ENCODE measurements at regions of chr9 and their contacts with region 1.

Region 1: GRCh38 chr9:124617471-124618141 is 110.4 kb upstream of the NR5A1 start:
- DNase-seq: peak; percentile 89
- H3K4me3 Mint-ChIP-seq: no peak overlapping the region
- H3K27ac Mint-ChIP-seq: no peak overlapping the region
- H3K4me1 Mint-ChIP-seq: no peaks in the 10 kb centered on the region
- H3K27me3 Mint-ChIP-seq: no peaks in the 10 kb centered on the region

Region 2: DNA sequence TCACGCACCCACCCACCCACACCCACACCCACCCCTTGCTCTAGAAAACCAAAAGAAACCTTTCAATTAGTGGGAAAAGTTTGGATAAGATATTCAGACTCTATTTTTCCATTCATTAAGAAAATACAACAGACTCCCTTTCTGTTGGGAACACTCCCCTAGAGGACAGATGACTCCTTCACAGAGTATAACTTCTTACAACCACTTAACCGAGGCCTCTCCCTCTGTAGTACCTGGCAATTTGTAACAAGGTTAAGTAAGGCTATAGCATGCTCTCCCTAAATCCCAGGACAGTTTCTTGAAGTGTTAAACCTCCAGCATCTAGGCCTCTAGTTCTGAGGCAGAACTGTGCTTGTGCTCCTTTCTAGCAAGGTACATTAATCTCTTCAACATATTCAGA is 34.5 kb before region 1 on chr9:
- CTCF ChIA-PET with region 1: no interaction called
- intact Hi-C with region 1: no loop called
- DNase-seq: no peak
- H3K4me3 Mint-ChIP-seq: no peak overlapping the region
- H3K27ac Mint-ChIP-seq: no peak overlapping the region
- H3K4me1 Mint-ChIP-seq: no peaks in the 10 kb centered on the region
- H3K27me3 Mint-ChIP-seq: no peaks in the 10 kb centered on the region

Region 3: GRCh38 chr9:124598048-124598447 is 19.6 kb before region 1 on chr9:
- CTCF ChIA-PET with region 1: interaction called, 11 read pairs
- intact Hi-C with region 1: no loop called
- DNase-seq: no peak
- H3K4me3 Mint-ChIP-seq: no peak overlapping the region
- H3K27ac Mint-ChIP-seq: no peak overlapping the region
- H3K4me1 Mint-ChIP-seq: no peaks in the 10 kb centered on the region
- H3K27me3 Mint-ChIP-seq: peaks cover 18% of the 10 kb centered on the region

Region 4: DNA sequence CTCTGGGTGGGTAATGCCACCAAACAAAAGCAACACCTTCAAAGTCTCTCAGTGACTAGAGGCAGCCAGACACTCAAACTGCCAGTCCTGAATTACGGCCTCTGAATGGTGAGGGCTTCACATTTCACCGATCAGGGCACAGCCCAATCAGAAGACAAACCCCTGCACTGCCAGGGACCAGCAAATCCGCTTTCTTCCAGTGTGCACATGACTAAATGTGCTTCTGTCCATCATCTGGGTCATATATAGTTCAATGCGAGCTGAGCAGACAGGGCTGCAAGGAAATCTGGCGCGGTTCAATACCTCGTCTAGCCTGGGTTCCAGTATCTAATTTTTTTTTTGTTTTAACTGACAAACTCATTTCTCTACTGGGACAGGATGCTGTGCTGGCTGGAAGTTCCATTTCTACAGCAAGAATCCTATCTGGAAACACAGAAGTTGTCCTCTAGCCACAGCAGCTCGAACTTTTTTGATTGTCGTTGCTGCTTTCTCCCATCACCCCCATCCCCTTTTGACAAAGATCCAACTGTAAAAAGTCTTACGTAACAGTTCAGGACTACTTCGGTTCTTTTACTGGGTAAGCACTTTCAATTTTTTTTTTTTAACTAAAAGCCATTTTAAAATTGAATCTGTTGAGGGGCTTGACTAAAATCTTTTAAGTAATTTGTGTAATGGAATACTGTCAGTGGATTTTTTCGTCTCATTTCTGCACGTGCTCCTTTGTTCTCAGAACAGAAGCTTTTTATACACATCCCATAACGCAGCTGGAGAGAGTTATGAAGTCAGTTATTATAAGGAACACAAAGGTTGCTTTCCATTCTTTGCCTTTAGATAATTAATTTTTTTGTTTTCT is 40.8 kb after region 1 on chr9:
- CTCF ChIA-PET with region 1: interaction called, 25 read pairs
- intact Hi-C with region 1: loop called (anchors 2 kb)
- DNase-seq: peak; percentile 75
- H3K4me3 Mint-ChIP-seq: peak overlapping the region; percentile 95
- H3K27ac Mint-ChIP-seq: peak overlapping the region; percentile 89
- H3K4me1 Mint-ChIP-seq: peaks cover 11% of the 10 kb centered on the region
- H3K27me3 Mint-ChIP-seq: no peaks in the 10 kb centered on the region

Region 5: DNA sequence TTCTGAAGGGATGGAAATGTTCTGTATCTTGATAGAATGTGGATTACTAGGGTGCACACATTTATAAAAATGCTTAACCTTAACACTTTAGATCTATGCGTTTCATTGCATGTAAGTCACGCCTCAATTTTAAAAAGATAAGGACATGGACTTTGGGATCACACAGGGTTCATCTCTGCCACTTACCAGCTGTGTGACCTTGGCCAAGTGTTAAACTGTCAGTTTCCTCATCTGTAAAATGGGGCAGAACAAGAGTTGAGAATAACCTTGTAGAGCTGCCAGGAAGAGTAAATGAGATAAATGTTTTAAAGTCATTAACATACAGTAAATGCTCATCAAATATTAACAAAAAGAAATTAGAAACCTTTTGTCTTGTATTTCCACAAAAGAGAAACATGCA is 100.0 kb after region 1 on chr9:
- CTCF ChIA-PET with region 1: interaction called, 115 read pairs
- intact Hi-C with region 1: loop called (anchors 1 kb)
- DNase-seq: no peak
- H3K4me3 Mint-ChIP-seq: no peak overlapping the region
- H3K27ac Mint-ChIP-seq: no peak overlapping the region
- H3K4me1 Mint-ChIP-seq: peaks cover 11% of the 10 kb centered on the region
- H3K27me3 Mint-ChIP-seq: peaks cover 4% of the 10 kb centered on the region

Region 6: DNA sequence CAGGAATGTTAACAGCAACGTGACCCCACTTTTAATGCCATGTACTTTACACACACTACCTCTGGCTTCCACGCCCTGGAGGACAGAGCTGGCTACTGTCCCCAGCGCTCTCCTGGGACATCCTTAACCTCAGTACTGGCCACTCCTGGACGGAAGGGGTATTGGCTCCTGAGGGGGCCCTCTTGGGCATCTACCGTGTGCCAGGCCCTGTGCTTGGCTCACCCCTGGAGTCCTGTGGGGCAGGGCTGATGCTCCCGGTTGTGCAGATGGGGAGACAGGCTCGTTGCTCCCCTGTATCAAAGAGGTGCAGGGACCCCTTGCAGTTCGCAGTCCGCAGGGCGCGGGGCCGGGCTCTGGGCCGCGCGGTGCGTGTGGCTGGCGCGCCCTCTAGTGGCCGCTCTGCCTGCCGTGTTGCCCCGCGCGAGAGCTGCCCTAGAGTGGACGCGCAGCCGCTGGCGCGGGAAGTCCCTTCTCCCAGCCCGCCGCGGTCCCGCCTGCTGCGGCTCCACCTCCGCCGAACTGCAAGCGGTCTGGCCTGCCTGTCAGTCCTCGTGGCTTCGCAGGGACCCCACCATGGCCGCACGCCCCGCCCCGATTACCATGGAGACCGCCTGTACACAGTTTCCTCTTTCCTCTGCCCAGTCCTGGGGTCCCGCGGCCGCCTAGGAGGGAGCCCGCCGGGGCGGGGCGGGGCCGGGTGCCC is 235.4 kb after region 1 on chr9 and contains the start of gene WDR38:
- CTCF ChIA-PET with region 1: interaction called, 3 read pairs
- intact Hi-C with region 1: loop called (anchors 1 kb)
- DNase-seq: peak; percentile 83
- H3K4me3 Mint-ChIP-seq: peak within 1 kb of the TSS; percentile 64
- H3K27ac Mint-ChIP-seq: no peak within 1 kb of the TSS
- H3K4me1 Mint-ChIP-seq: peaks cover 20% of the 10 kb centered on the region
- H3K27me3 Mint-ChIP-seq: peaks cover 3% of the 10 kb centered on the region
- total RNA-seq, gene WDR38: not detected

Region 7: DNA sequence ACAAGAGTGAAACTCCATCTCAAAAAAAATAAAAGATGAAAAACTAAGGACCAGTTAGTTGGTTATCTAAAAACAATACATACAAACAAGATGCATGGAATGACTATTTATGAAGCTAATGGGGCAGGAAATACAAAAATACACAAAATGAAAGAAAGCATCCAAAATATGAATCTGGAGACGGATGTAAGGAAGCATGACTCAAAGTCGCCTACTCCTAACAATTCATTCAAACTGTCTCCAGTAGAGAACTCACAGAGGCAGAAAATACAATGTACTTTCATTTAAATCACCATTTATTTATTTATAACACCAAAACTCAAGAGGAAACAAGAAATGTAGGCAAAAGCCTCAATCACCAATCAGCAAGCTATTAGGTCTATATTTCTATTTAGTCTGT is 457.4 kb after region 1 on chr9:
- CTCF ChIA-PET with region 1: no interaction called
- intact Hi-C with region 1: no loop called
- DNase-seq: no peak
- H3K4me3 Mint-ChIP-seq: no peak overlapping the region
- H3K27ac Mint-ChIP-seq: no peak overlapping the region
- H3K4me1 Mint-ChIP-seq: no peaks in the 10 kb centered on the region
- H3K27me3 Mint-ChIP-seq: no peaks in the 10 kb centered on the region

Region 8: GRCh38 chr9:125296833-125297372 is 679.3 kb after region 1 on chr9:
- CTCF ChIA-PET with region 1: no interaction called
- intact Hi-C with region 1: no loop called
- DNase-seq: no peak
- H3K4me3 Mint-ChIP-seq: no peak overlapping the region
- H3K27ac Mint-ChIP-seq: no peak overlapping the region
- H3K4me1 Mint-ChIP-seq: no peaks in the 10 kb centered on the region
- H3K27me3 Mint-ChIP-seq: no peaks in the 10 kb centered on the region

Measured in activated naive CD4-positive, alpha-beta T cell treated with anti-CD3 and anti-CD28 coated beads for 36 hours (primary cell).